ENCODE measurements at regions of chr14 and their contacts with region 1.

Region 1: GRCh38 chr14:55051426-55052268 is at the start of gene MAPK1IP1L:
- DNase-seq: peak; percentile 98
- H3K4me3 ChIP-seq: peak within 1 kb of the TSS; percentile 93 to 98
- H3K27ac ChIP-seq: peak within 1 kb of the TSS; percentile 98 to 100
- H3K4me1 ChIP-seq: peaks cover 7 to 19% of the 10 kb centered on the region in 2 experiments; a peak in 3 of 4 replicates
- H3K27me3 ChIP-seq: no peaks in the 10 kb centered on the region
- CTCF ChIP-seq: peak; percentile 88
- EP300 ChIP-seq: peak in 1 of 2 experiments; percentile 19; a peak in 3 of 4 replicates
- RAD21 ChIP-seq: peak; percentile 58
- polyA plus RNA-seq, gene MAPK1IP1L: 105 and 129 TPM in 2 replicates

Region 2: GRCh38 chr14:54818201-54819133 is 233.2 kb before region 1 on chr14:
- CTCF ChIA-PET with region 1: interaction called, 6 read pairs
- POLR2A ChIA-PET with region 1: interaction called, 11 read pairs
- DNase-seq: peak; percentile 76
- H3K4me3 ChIP-seq: peak overlapping the region in 1 of 2 experiments; percentile 12; a peak in 3 of 4 replicates
- H3K27ac ChIP-seq: peak overlapping the region; percentile 67 to 100
- H3K4me1 ChIP-seq: peaks cover 5 to 56% of the 10 kb centered on the region in 2 experiments; a peak in 3 of 4 replicates
- H3K27me3 ChIP-seq: no peaks in the 10 kb centered on the region
- CTCF ChIP-seq: no peak
- EP300 ChIP-seq: peak; percentile 63 to 98; a peak in 3 of 4 replicates
- RAD21 ChIP-seq: peak; percentile 28

Region 3: DNA sequence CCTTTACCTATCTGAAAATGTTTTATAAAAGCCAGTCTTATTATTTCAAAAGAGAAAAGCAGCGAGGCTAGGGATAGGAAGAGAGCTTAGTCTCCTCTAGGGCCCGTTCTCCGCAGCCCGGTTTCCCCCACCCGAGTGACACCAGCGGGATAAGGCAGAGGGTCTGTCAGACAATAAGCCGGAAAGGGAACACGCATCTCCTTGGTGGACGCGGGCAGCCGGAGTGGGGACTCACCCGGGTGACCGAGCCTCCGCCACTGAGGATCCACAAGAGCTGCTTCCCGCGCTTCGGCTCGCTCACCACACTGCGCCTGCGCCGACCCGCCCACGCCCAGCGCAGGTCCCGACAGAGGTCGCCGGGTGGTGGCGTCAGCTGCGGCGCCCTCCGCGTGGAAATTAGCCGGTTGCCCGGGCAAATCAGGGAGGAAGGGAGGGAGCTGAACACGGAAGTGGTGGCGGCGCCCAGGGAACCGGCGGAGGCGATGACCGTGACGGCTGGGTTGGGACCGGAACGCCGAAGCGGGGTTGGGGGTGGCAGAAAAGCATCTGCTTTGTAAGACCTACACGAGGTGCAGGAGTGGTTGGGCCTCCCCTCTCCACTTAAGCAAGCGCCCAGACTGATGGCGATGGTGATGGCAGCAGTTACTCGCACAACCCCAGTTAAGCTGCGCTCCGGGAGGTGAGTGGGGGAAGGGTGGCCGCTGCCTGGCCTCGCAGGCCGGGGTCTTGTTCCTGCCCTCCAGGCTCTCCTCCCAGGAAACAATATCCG is 24.7 kb before region 1 on chr14 and contains the starts of genes SOCS4 and WDHD1:
- CTCF ChIA-PET with region 1: interaction called, 40 read pairs
- POLR2A ChIA-PET with region 1: interaction called, 32 read pairs
- DNase-seq: peak; percentile 96
- H3K4me3 ChIP-seq: peak within 1 kb of the TSS; percentile 69 to 73
- H3K27ac ChIP-seq: peak within 1 kb of the TSS; percentile 78 to 84
- H3K4me1 ChIP-seq: peaks cover 17 to 19% of the 10 kb centered on the region in 2 experiments; a peak in 3 of 4 replicates
- H3K27me3 ChIP-seq: no peaks in the 10 kb centered on the region
- CTCF ChIP-seq: no peak
- EP300 ChIP-seq: no peak
- RAD21 ChIP-seq: no peak
- polyA plus RNA-seq, gene SOCS4: 2.2 and 3.2 TPM in 2 replicates
- polyA plus RNA-seq, gene WDHD1: 2.9 and 3.6 TPM in 2 replicates

Region 4: GRCh38 chr14:55038708-55039107 is 12.9 kb before region 1 on chr14:
- CTCF ChIA-PET with region 1: interaction called, 18 read pairs
- POLR2A ChIA-PET with region 1: interaction called, 3 read pairs
- DNase-seq: no peak
- H3K4me3 ChIP-seq: no peak overlapping the region
- H3K27ac ChIP-seq: no peak overlapping the region
- H3K4me1 ChIP-seq: no peaks in the 10 kb centered on the region
- H3K27me3 ChIP-seq: no peaks in the 10 kb centered on the region
- CTCF ChIP-seq: no peak
- EP300 ChIP-seq: no peak
- RAD21 ChIP-seq: no peak

Region 5: GRCh38 chr14:55102141-55102621 is 50.5 kb after region 1 on chr14:
- CTCF ChIA-PET with region 1: interaction called, 13 read pairs
- POLR2A ChIA-PET with region 1: no interaction called
- DNase-seq: peak; percentile 69
- H3K4me3 ChIP-seq: no peak overlapping the region
- H3K27ac ChIP-seq: peak overlapping the region; percentile 87 to 89
- H3K4me1 ChIP-seq: peaks cover 16 to 22% of the 10 kb centered on the region in 2 experiments
- H3K27me3 ChIP-seq: no peaks in the 10 kb centered on the region
- CTCF ChIP-seq: no peak
- EP300 ChIP-seq: peak; percentile 66 to 79; a peak in 3 of 4 replicates
- RAD21 ChIP-seq: peak; percentile 19; the same call in 1 of the 2 replicates

Region 6: DNA sequence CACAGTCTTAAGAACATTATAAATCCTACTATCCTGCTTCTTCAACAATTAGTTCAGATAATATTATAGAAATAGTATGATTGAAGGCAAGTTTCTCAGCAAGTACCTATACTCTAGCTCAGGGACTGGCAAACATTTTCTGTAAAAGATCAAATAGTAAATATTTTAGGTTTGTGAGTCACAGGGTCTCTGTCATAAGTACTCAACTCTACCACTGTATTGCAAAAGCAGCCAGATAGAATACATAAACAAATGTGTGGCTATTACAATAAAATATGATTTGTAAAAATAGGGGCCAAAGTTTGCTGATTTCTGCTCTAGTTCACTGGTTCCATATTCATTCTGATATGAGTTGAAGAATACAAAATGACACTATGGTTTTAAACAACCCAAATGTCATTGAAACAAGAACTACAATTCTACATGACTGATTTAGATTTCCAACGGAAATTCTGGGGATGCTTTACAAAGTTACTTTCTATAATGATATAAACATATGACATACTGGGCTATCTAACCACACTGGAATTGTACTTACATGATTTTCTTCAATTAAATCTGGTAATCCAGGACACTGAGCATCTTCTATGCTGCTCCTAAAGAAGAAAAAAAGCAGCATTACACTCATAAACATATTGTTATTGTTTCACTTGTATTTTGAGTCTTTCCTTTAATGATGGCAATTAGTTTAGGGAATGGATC is 100.6 kb after region 1 on chr14:
- CTCF ChIA-PET with region 1: interaction called, 14 read pairs
- POLR2A ChIA-PET with region 1: no interaction called
- DNase-seq: no peak
- H3K4me3 ChIP-seq: no peak overlapping the region
- H3K27ac ChIP-seq: no peak overlapping the region
- H3K4me1 ChIP-seq: no peaks in the 10 kb centered on the region; a peak in 1 of 4 replicates
- H3K27me3 ChIP-seq: no peaks in the 10 kb centered on the region
- CTCF ChIP-seq: no peak
- EP300 ChIP-seq: no peak
- RAD21 ChIP-seq: no peak